Activated CD4-positive, alpha-beta T cell treated with anti-CD3 and anti-CD28 coated beads for 36 hours (primary cell): ENCODE measurements at regions of chr11 and their contacts with region 1.

Region 1: DNA sequence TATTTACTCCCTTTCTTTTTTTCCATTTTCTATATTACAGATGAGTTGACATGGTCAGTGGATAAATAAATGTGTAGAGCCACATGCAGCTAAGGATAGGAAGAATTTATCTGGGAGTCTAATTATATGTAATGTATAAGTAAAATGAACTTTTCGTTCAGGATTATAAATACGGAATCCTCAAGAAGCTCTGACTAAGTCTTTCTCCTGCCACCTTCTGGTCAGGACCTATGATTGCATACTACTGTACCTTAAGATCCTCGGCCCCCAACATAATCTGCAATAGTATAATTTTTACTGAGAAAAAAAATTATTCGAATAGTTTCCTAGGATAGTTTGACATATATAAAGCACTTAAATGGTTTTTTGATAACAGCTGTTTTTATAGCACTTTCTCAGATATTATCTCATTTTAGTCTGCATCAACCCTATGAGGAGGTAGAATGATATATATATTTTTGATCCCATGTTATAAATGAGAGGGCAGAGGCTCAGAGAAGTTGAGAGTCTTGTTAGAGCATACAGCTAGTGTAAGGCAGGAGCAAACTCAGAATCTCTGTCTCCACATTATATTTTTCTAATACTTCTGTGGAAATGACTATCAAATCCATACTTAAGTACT is 36.1 kb downstream of the CCDC90B start:
- DNase-seq: peak; percentile 10
- ATAC-seq: peak; percentile 75
- H3K4me3 Mint-ChIP-seq: no peak overlapping the region
- H3K27ac Mint-ChIP-seq: no peak overlapping the region
- H3K4me1 Mint-ChIP-seq: peaks cover 3% of the 10 kb centered on the region
- H3K27me3 Mint-ChIP-seq: no peaks in the 10 kb centered on the region

Region 2: DNA sequence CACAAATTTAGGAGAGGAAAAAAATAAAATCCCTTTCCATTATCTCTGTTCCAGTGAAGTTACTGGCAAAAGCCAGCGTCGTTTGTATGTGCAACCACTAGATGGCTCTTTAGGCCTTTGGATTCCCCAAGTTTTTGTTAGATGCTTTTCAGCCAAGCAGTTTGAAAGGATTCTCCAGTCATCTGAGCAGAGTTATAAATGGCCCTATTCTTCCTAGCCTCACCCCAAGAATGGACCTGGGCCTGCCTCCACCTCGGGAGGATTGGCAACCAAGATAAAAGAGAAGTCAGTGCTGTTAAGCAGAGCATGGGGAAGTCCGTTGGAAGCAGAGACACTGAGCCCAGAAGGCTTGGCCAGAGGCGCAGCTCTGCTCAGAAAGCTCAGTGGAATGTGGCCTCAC is 531.8 kb before region 1 on chr11:
- CTCF ChIA-PET with region 1: interaction called, 5 read pairs
- POLR2A ChIA-PET with region 1: no interaction called
- intact Hi-C with region 1: loop called in 1 of 2 experiments (anchors 1 kb)
- DNase-seq: peak; percentile 41
- ATAC-seq: peak; percentile 55
- H3K4me3 Mint-ChIP-seq: no peak overlapping the region
- H3K27ac Mint-ChIP-seq: no peak overlapping the region
- H3K4me1 Mint-ChIP-seq: no peaks in the 10 kb centered on the region
- H3K27me3 Mint-ChIP-seq: peaks cover under 1% of the 10 kb centered on the region

Region 3: GRCh38 chr11:82900277-82901164 is 349.6 kb before region 1 on chr11 and contains the start of gene PRCP:
- CTCF ChIA-PET with region 1: interaction called, 14 read pairs
- POLR2A ChIA-PET with region 1: interaction called, 4 read pairs
- intact Hi-C with region 1: no loop called
- DNase-seq: peak; percentile 97
- ATAC-seq: peak; percentile 85
- H3K4me3 Mint-ChIP-seq: peak within 1 kb of the TSS; percentile 91
- H3K27ac Mint-ChIP-seq: peak within 1 kb of the TSS; percentile 100
- H3K4me1 Mint-ChIP-seq: peaks cover 44% of the 10 kb centered on the region
- H3K27me3 Mint-ChIP-seq: no peaks in the 10 kb centered on the region
- total RNA-seq, gene PRCP: 18.2 to 23.4 TPM

Region 4: GRCh38 chr11:82906244-82906654 is 343.8 kb before region 1 on chr11:
- CTCF ChIA-PET with region 1: interaction called, 14 read pairs
- POLR2A ChIA-PET with region 1: interaction called, 4 read pairs
- intact Hi-C with region 1: loop called (anchors 1 kb)
- DNase-seq: no peak
- ATAC-seq: no peak
- H3K4me3 Mint-ChIP-seq: no peak overlapping the region
- H3K27ac Mint-ChIP-seq: no peak overlapping the region
- H3K4me1 Mint-ChIP-seq: peaks cover 46% of the 10 kb centered on the region
- H3K27me3 Mint-ChIP-seq: no peaks in the 10 kb centered on the region

Region 5: GRCh38 chr11:83087035-83087434 is 163.0 kb before region 1 on chr11:
- CTCF ChIA-PET with region 1: interaction called, 4 read pairs
- POLR2A ChIA-PET with region 1: no interaction called
- intact Hi-C with region 1: loop called in 1 of 2 experiments (anchors 5 kb)
- DNase-seq: no peak
- ATAC-seq: peak; percentile 18
- H3K4me3 Mint-ChIP-seq: no peak overlapping the region
- H3K27ac Mint-ChIP-seq: no peak overlapping the region
- H3K4me1 Mint-ChIP-seq: peaks cover 20% of the 10 kb centered on the region
- H3K27me3 Mint-ChIP-seq: no peaks in the 10 kb centered on the region

Region 6: GRCh38 chr11:83235825-83236224 is 14.3 kb before region 1 on chr11:
- CTCF ChIA-PET with region 1: interaction called, 28 read pairs
- POLR2A ChIA-PET with region 1: no interaction called
- intact Hi-C with region 1: no loop called
- DNase-seq: no peak
- ATAC-seq: no peak
- H3K4me3 Mint-ChIP-seq: no peak overlapping the region
- H3K27ac Mint-ChIP-seq: no peak overlapping the region
- H3K4me1 Mint-ChIP-seq: no peaks in the 10 kb centered on the region
- H3K27me3 Mint-ChIP-seq: no peaks in the 10 kb centered on the region

Region 7: GRCh38 chr11:83292709-83293456 is 42.8 kb after region 1 on chr11:
- CTCF ChIA-PET with region 1: interaction called, 14 read pairs
- POLR2A ChIA-PET with region 1: no interaction called
- intact Hi-C with region 1: no loop called
- DNase-seq: peak; percentile 50
- ATAC-seq: peak; percentile 98
- H3K4me3 Mint-ChIP-seq: peak overlapping the region; percentile 52
- H3K27ac Mint-ChIP-seq: peak overlapping the region; percentile 56
- H3K4me1 Mint-ChIP-seq: peaks cover 10% of the 10 kb centered on the region
- H3K27me3 Mint-ChIP-seq: peaks cover 7% of the 10 kb centered on the region

Region 8: GRCh38 chr11:83326311-83326710 is 76.2 kb after region 1 on chr11:
- CTCF ChIA-PET with region 1: no interaction called
- POLR2A ChIA-PET with region 1: no interaction called
- intact Hi-C with region 1: no loop called
- DNase-seq: no peak
- ATAC-seq: no peak
- H3K4me3 Mint-ChIP-seq: no peak overlapping the region
- H3K27ac Mint-ChIP-seq: no peak overlapping the region
- H3K4me1 Mint-ChIP-seq: no peaks in the 10 kb centered on the region
- H3K27me3 Mint-ChIP-seq: peaks cover 25% of the 10 kb centered on the region